HepG2 (cell line): ENCODE measurements at regions of chr9 and their contacts with region 1.

Region 1: GRCh38 chr9:137240861-137241489 is at the start of gene TUBB4B:
- DNase-seq: peak; percentile 99
- ATAC-seq: peak; percentile 55
- H3K4me3 ChIP-seq: peak within 1 kb of the TSS; percentile 89 to 94 (median 94)
- H3K27ac ChIP-seq: peak within 1 kb of the TSS; percentile 96
- H3K4me1 ChIP-seq: peaks cover 62% of the 10 kb centered on the region
- H3K27me3 ChIP-seq: no peaks in the 10 kb centered on the region; a peak in 1 of 5 replicates
- CTCF ChIP-seq: no peak
- EP300 ChIP-seq: no peak
- POLR2A ChIP-seq: peak in 1 of 2 experiments; percentile 99; a peak in 2 of 4 replicates
- RAD21 ChIP-seq: peak; percentile 69
- total RNA-seq, gene TUBB4B: 412 and 481 TPM in 2 replicates

Region 2: GRCh38 chr9:136944519-136945279 is 296.3 kb before region 1 on chr9 and contains the starts of genes C8G and FBXW5:
- CTCF ChIA-PET with region 1: no interaction called
- POLR2A ChIA-PET with region 1: no interaction called
- in situ Hi-C with region 1: no loop called
- intact Hi-C with region 1: no loop called
- DNase-seq: peak; percentile 87
- ATAC-seq: peak; percentile 25
- H3K4me3 ChIP-seq: peak within 1 kb of the TSS; percentile 90 to 95 (median 91)
- H3K27ac ChIP-seq: peak within 1 kb of the TSS; percentile 75
- H3K4me1 ChIP-seq: peaks cover 44% of the 10 kb centered on the region
- H3K27me3 ChIP-seq: no peaks in the 10 kb centered on the region
- CTCF ChIP-seq: peak; percentile 92
- EP300 ChIP-seq: no peak; a peak in 1 of 4 replicates
- POLR2A ChIP-seq: no peak
- RAD21 ChIP-seq: peak; percentile 52; the same call in 1 of the 2 replicates
- total RNA-seq, gene C8G: 2.0 and 4.9 TPM in 2 replicates
- total RNA-seq, gene FBXW5: 47.4 and 60.4 TPM in 2 replicates

Region 3: GRCh38 chr9:137086531-137087408 is 154.2 kb before region 1 on chr9 and contains the start of gene MAN1B1:
- CTCF ChIA-PET with region 1: no interaction called
- POLR2A ChIA-PET with region 1: interaction called, 15 read pairs
- in situ Hi-C with region 1: no loop called
- intact Hi-C with region 1: no loop called
- DNase-seq: peak; percentile 97
- ATAC-seq: peak; percentile 87
- H3K4me3 ChIP-seq: peak within 1 kb of the TSS; percentile 77 to 89 (median 79)
- H3K27ac ChIP-seq: peak within 1 kb of the TSS; percentile 83
- H3K4me1 ChIP-seq: peaks cover 59% of the 10 kb centered on the region
- H3K27me3 ChIP-seq: no peaks in the 10 kb centered on the region; a peak in 1 of 5 replicates
- CTCF ChIP-seq: peak; percentile 45
- EP300 ChIP-seq: no peak
- POLR2A ChIP-seq: peak in 1 of 2 experiments; percentile 65; a peak in 2 of 4 replicates
- RAD21 ChIP-seq: peak; percentile 53; the same call in 1 of the 2 replicates
- total RNA-seq, gene MAN1B1: 19.0 and 48.9 TPM in 2 replicates

Region 4: DNA sequence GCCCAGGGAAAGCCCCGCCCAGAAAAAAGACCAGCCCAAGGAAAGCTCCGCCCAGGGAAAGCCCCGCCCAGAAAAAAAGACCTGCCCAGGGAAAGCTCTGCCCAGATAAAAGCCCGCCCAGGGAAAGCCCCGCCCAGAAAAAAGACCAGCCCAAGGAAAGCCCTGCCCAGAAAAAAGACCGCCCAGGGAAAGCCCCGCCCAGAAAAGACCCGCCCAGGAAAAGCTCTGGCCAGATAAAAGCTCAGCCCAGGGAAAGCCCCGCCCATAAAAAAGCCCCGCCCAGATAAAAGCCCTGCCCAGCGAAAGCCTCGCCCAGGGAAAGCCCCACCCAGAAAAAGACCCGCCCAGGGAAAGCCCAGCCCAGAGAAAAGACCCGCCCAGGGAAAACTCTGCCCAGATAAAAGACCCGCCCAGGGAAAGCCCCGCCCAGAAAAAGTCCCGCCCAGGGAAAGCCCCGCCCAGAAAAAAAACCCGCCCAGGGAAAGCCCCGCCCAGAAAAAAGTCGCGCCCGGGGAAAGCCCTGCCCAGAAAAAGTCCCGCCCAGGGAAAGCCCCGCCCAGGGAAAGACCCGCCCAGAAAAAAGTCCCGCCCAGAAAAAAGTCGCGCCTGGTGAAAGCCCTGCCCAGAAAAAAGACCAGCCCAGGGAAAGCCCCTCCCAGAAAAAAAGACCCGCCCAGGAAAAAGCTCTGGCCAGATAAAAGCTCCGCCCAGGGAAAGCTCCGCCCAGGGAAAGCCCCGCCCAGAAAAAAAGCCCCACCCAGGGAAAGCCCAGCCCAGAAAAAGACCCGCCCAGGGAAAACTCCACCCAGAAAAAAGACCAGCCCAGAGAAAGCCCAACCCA is 90.1 kb before region 1 on chr9:
- CTCF ChIA-PET with region 1: no interaction called
- POLR2A ChIA-PET with region 1: interaction called, 22 read pairs
- in situ Hi-C with region 1: no loop called
- intact Hi-C with region 1: no loop called
- DNase-seq: peak; percentile 84
- ATAC-seq: peak; percentile 19
- H3K4me3 ChIP-seq: no peak overlapping the region
- H3K27ac ChIP-seq: no peak overlapping the region
- H3K4me1 ChIP-seq: peaks cover 30% of the 10 kb centered on the region
- H3K27me3 ChIP-seq: peaks cover 8 to 38% of the 10 kb centered on the region in 2 experiments; a peak in 4 of 5 replicates
- CTCF ChIP-seq: no peak
- EP300 ChIP-seq: no peak
- POLR2A ChIP-seq: no peak
- RAD21 ChIP-seq: no peak

Region 5: GRCh38 chr9:137200311-137201204 is 40.4 kb before region 1 on chr9 and contains the start of gene TPRN:
- CTCF ChIA-PET with region 1: no interaction called
- POLR2A ChIA-PET with region 1: interaction called, 29 read pairs
- in situ Hi-C with region 1: no loop called
- intact Hi-C with region 1: no loop called
- DNase-seq: peak; percentile 99
- ATAC-seq: peak; percentile 87
- H3K4me3 ChIP-seq: peak within 1 kb of the TSS; percentile 71 to 78 (median 72)
- H3K27ac ChIP-seq: peak within 1 kb of the TSS; percentile 96
- H3K4me1 ChIP-seq: peaks cover 71% of the 10 kb centered on the region
- H3K27me3 ChIP-seq: no peaks in the 10 kb centered on the region; a peak in 1 of 5 replicates
- CTCF ChIP-seq: no peak
- EP300 ChIP-seq: 0 out of 4 replicates have a peak, but pooled peaks of 1 of the 2 experiments have one; percentile 15
- POLR2A ChIP-seq: peak in 1 of 2 experiments; percentile 77; a peak in 2 of 4 replicates
- RAD21 ChIP-seq: no peak; the same call in 1 of the 2 replicates
- total RNA-seq, gene TPRN: 17.5 and 19.2 TPM in 2 replicates

Region 6: DNA sequence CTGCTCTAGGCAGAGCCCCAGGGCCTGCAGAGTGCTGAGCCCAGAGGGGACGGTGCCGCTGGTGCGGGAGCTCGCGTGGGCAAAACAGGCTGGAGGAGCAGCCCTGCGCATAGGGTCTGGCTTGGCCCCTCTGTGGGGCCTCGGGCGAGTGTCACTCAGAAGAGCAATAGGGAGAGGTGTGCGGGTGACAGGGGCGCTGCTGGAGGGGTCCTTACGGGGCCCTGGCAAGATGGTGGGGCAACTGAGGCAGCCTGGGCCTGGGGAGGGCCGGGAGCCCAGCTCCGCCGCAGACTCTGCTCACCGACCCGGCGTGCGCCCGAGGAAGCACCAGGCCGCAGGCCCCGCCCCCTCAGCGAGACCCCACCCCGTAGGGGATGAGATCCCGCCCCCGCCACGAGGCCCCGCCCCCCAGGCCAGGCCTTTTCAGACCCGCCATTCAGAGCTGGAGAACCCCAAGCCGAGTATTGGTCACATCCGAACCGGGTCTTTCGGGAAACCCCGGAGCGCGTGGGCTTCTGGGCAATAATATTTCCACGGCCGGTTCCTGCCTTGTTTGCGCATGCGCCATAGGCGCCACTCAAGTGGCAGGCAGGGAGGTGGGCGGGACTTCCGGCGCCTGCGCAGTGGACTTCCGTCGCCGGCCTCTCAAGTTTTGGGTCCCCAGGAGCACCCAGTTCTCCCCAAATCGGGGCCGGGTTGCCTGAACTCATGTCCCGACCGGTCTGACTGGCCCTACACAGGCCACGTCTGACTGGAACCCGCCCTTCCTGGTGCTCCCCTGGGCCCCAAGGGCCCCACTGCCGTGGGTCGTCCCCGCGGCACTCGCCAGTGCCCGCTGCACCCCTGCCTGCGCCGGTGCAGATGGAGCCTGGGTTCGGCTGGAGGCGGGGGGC is 17.7 kb before region 1 on chr9:
- CTCF ChIA-PET with region 1: interaction called, 3 read pairs
- POLR2A ChIA-PET with region 1: interaction called, 45 read pairs
- in situ Hi-C with region 1: no loop called
- intact Hi-C with region 1: loop called (anchors 2 kb)
- DNase-seq: peak; percentile 98
- ATAC-seq: peak; percentile 44
- H3K4me3 ChIP-seq: peak overlapping the region; percentile 84 to 99 (median 92)
- H3K27ac ChIP-seq: peak overlapping the region; percentile 76
- H3K4me1 ChIP-seq: peaks cover 64% of the 10 kb centered on the region
- H3K27me3 ChIP-seq: no peaks in the 10 kb centered on the region; a peak in 1 of 5 replicates
- CTCF ChIP-seq: no peak
- EP300 ChIP-seq: no peak
- POLR2A ChIP-seq: peak in 1 of 2 experiments; percentile 30; a peak in 1 of 4 replicates
- RAD21 ChIP-seq: peak; percentile 30; the same call in 1 of the 2 replicates

Region 7: GRCh38 chr9:137254624-137255447 is 13.9 kb after region 1 on chr9 and contains the start of gene NELFB:
- CTCF ChIA-PET with region 1: interaction called, 3 read pairs
- POLR2A ChIA-PET with region 1: interaction called, 317 read pairs
- in situ Hi-C with region 1: no loop called
- intact Hi-C with region 1: no loop called
- DNase-seq: peak; percentile 76
- ATAC-seq: peak; percentile 53
- H3K4me3 ChIP-seq: peak within 1 kb of the TSS; percentile 91 to 98 (median 91)
- H3K27ac ChIP-seq: peak within 1 kb of the TSS; percentile 80
- H3K4me1 ChIP-seq: peaks cover 57% of the 10 kb centered on the region
- H3K27me3 ChIP-seq: no peaks in the 10 kb centered on the region; a peak in 1 of 5 replicates
- CTCF ChIP-seq: peak; percentile 50
- EP300 ChIP-seq: no peak
- POLR2A ChIP-seq: peak in 1 of 2 experiments; percentile 80; a peak in 2 of 4 replicates
- RAD21 ChIP-seq: peak; percentile 45; the same call in 1 of the 2 replicates
- total RNA-seq, gene NELFB: 38.7 and 45.8 TPM in 2 replicates

Region 8: GRCh38 chr9:137269231-137269772 is 28.3 kb after region 1 on chr9:
- CTCF ChIA-PET with region 1: no interaction called
- POLR2A ChIA-PET with region 1: interaction called, 11 read pairs
- in situ Hi-C with region 1: no loop called
- intact Hi-C with region 1: no loop called
- DNase-seq: no peak
- ATAC-seq: no peak
- H3K4me3 ChIP-seq: no peak overlapping the region
- H3K27ac ChIP-seq: peak overlapping the region; percentile 63
- H3K4me1 ChIP-seq: peaks cover 19% of the 10 kb centered on the region
- H3K27me3 ChIP-seq: no peaks in the 10 kb centered on the region
- CTCF ChIP-seq: no peak
- EP300 ChIP-seq: no peak
- POLR2A ChIP-seq: no peak
- RAD21 ChIP-seq: no peak

Region 9: DNA sequence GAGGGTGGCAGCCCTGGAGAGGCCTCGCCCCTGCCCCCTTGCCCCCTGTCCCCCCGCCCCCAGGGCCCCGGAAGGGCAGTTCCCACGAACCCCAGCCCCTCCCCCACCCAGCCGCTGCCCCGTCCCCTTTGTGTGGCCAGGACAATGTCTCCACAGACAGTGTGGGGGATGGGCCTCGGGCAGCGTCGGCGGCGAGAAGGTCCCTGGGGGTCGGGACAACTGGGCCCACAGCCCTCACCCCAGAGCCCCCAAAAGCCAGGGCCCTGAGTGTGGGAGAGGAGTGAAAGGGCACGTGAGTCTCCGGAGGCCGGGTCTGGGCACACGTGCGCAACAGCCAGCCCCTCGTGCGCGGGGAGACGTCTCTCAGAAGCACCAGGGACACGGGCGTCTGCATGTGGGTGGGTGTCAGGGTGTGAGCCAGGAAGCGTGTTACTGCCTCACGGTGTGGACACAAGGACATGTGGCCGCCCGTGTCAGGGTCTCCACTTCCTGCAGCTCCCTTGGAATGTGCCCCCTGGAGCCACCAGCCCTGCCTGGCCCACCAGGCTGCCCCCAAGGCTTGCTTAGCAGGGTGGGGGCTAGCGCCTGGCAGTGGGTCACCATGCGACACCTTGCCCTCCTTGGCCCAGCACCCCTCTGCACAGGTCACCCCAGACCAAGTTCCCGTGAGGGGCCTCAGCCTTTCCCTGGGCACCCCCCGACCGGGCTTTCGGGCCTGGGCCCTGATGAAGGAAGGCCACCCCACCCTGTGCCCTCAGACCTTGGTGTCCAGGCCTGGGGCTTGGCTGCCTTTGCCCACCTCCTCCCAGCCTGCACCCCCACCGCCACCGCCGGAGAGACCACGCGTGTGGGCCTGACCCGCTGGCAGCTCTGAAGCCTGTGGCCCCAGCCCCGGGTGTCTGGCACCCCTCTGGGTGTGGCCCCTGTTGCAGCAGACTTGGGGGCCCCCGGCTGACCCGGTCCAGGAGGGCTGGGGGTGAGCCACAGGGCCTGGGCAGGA is 73.9 kb after region 1 on chr9:
- CTCF ChIA-PET with region 1: no interaction called
- POLR2A ChIA-PET with region 1: no interaction called
- in situ Hi-C with region 1: no loop called
- intact Hi-C with region 1: no loop called
- DNase-seq: no peak
- ATAC-seq: no peak
- H3K4me3 ChIP-seq: peak overlapping the region in 1 of 3 experiments; percentile 55; a peak in 1 of 6 replicates
- H3K27ac ChIP-seq: no peak overlapping the region
- H3K4me1 ChIP-seq: peaks cover 52% of the 10 kb centered on the region
- H3K27me3 ChIP-seq: peaks cover 21 to 69% of the 10 kb centered on the region in 2 experiments
- CTCF ChIP-seq: no peak
- EP300 ChIP-seq: no peak
- POLR2A ChIP-seq: no peak
- RAD21 ChIP-seq: no peak